Ovary (tissue), 10 donors: ENCODE measurements at regions of chr5 and their contacts with region 1.

Region 1: GRCh38 chr5:10741661-10742060 is 19.4 kb downstream of the DAP start:
- DNase-seq: no peak
- H3K4me3 ChIP-seq: no peak overlapping the region
- H3K27ac ChIP-seq: no peak overlapping the region
- H3K4me1 ChIP-seq: no peaks in the 10 kb centered on the region
- H3K27me3 ChIP-seq: no peaks in the 10 kb centered on the region
- CTCF ChIP-seq: no peak
- EP300 ChIP-seq: no peak
- POLR2A ChIP-seq: no peak

Region 2: DNA sequence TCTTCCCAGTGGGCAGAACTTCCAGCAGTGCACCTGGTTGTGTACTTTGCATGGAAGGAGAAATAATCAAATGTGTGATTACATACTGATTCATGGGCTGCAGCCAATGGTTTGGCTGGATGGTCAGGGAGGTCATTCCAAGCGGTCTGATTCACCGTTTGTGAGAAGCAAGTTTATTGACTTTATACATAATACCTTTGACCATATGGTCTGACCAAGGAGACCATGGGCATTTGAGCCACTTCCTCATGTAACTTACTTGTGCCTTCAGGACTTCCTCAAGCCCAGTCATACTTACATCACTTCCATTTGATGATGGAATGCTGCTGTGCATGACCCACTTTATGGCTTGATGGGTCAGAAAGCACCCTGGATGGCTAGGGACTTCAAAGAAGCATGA is 21.7 kb before region 1 on chr5:
- intact Hi-C with region 1: loop called in 1 of 4 experiments (anchors 1 kb)
- DNase-seq: no peak
- H3K4me3 ChIP-seq: no peak overlapping the region
- H3K27ac ChIP-seq: no peak overlapping the region
- H3K4me1 ChIP-seq: peaks cover 2% of the 10 kb centered on the region
- H3K27me3 ChIP-seq: no peaks in the 10 kb centered on the region
- CTCF ChIP-seq: no peak
- EP300 ChIP-seq: no peak
- POLR2A ChIP-seq: no peak

Region 3: DNA sequence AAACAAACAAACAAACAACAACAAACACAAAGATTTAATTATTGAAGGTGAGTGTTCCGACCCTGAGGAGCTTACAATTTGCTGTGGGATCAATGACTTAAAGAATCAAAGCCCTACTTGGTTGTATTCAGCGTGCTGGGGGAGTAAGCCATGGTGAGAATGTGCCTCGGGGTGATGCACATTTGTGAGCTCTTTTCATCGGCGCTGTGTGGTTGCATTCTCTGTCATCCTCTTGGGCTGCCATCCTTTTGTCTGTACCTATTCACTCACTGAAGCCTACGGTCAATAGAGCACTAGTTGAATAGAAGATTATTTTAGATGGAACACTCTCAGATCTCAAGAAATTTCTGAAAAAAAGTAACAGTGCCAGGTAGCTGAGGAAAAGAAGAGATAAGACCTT is 958.7 kb after region 1 on chr5:
- intact Hi-C with region 1: no loop called
- DNase-seq: no peak
- H3K4me3 ChIP-seq: no peak overlapping the region
- H3K27ac ChIP-seq: no peak overlapping the region
- H3K4me1 ChIP-seq: no peaks in the 10 kb centered on the region
- H3K27me3 ChIP-seq: no peaks in the 10 kb centered on the region
- CTCF ChIP-seq: no peak
- EP300 ChIP-seq: no peak
- POLR2A ChIP-seq: no peak